ENCODE measurements at regions of chr7 and their contacts with region 1.

Region 1: DNA sequence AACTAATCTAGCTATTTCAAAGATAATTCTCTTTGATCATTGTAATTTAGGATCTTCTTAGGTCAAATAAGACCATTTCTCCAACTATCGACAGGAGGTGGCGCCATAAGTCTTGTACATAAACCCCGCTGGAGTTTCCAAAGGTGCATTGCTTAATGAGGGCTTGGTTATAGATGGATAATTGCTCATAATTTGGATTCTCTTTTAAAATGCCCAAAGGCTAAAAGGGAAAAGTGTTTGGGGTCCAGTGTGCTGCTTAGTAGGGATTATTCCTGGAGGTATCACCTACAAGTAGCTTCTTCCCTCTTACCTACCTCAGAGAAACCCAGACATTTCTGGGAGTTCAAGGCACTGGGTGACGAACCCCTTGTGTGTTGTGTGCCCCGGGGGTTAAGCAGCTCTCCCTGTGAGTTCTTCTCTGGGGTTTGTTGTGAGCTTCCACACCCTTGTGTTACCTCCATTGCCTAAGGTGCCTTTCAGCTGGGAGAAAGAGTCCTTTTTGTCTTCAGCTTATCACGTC is 75.2 kb downstream of the PAXIP1 start:
- DNase-seq: peak; percentile 39
- ATAC-seq: peak; percentile 87
- H3K4me3 ChIP-seq: peak overlapping the region; percentile 66
- H3K27ac ChIP-seq: peak overlapping the region; percentile 82
- H3K4me1 ChIP-seq: peaks cover 4% of the 10 kb centered on the region; the same call in 1 of the 2 replicates
- H3K27me3 ChIP-seq: no peaks in the 10 kb centered on the region
- CTCF ChIP-seq: peak; percentile 61 to 76 (median 62)
- EP300 ChIP-seq: no peak
- POLR2A ChIP-seq: no peak
- RAD21 ChIP-seq: peak; percentile 91

Region 2: GRCh38 chr7:154942691-154943090 is 15.0 kb after region 1 on chr7:
- CTCF ChIA-PET with region 1: interaction called, 22 read pairs
- POLR2A ChIA-PET with region 1: no interaction called
- RAD21 ChIA-PET with region 1: interaction called, 3 read pairs
- SMC1A ChIA-PET with region 1: interaction called, 15 read pairs
- in situ Hi-C with region 1: no loop called
- intact Hi-C with region 1: no loop called
- DNase-seq: no peak
- ATAC-seq: no peak
- H3K4me3 ChIP-seq: no peak overlapping the region
- H3K27ac ChIP-seq: no peak overlapping the region
- H3K4me1 ChIP-seq: no peaks in the 10 kb centered on the region
- H3K27me3 ChIP-seq: no peaks in the 10 kb centered on the region
- CTCF ChIP-seq: no peak
- EP300 ChIP-seq: no peak
- POLR2A ChIP-seq: no peak
- RAD21 ChIP-seq: no peak

Region 3: GRCh38 chr7:154996752-154997151 is 69.1 kb after region 1 on chr7:
- CTCF ChIA-PET with region 1: interaction called, 16 read pairs
- POLR2A ChIA-PET with region 1: interaction called, 6 read pairs
- RAD21 ChIA-PET with region 1: interaction called, 6 read pairs
- SMC1A ChIA-PET with region 1: interaction called, 4 read pairs
- in situ Hi-C with region 1: no loop called
- intact Hi-C with region 1: no loop called
- DNase-seq: no peak
- ATAC-seq: no peak
- H3K4me3 ChIP-seq: no peak overlapping the region
- H3K27ac ChIP-seq: no peak overlapping the region
- H3K4me1 ChIP-seq: 0 out of 2 replicates have a peak, but pooled peaks cover 5% of the 10 kb centered on the region
- H3K27me3 ChIP-seq: no peaks in the 10 kb centered on the region
- CTCF ChIP-seq: no peak
- EP300 ChIP-seq: no peak
- POLR2A ChIP-seq: no peak
- RAD21 ChIP-seq: no peak

Region 4: DNA sequence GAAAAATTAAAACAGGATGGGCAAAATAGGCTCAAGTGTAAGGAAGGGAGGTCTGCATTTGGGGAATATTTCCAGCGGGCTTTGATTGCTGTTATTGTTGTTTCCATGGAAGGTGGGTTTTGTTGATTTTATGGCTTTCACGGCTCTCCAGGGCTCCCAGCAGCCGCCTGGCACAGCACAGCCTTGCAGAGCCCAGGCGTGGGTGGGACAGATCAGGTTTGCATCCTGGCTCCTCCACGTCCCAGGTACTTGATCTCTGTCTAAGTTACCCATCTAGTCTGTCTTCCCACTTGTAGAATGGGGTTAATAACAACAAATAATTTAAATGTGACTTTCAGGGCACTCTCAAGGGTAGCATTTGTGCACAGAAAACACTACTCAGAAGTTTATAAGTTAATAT is 187.6 kb after region 1 on chr7:
- CTCF ChIA-PET with region 1: interaction called, 20 read pairs
- POLR2A ChIA-PET with region 1: no interaction called
- RAD21 ChIA-PET with region 1: interaction called, 10 read pairs
- SMC1A ChIA-PET with region 1: interaction called, 5 read pairs
- in situ Hi-C with region 1: no loop called
- intact Hi-C with region 1: no loop called
- DNase-seq: no peak
- ATAC-seq: no peak
- H3K4me3 ChIP-seq: no peak overlapping the region
- H3K27ac ChIP-seq: no peak overlapping the region
- H3K4me1 ChIP-seq: no peaks in the 10 kb centered on the region
- H3K27me3 ChIP-seq: no peaks in the 10 kb centered on the region
- CTCF ChIP-seq: no peak
- EP300 ChIP-seq: no peak
- POLR2A ChIP-seq: no peak
- RAD21 ChIP-seq: no peak

Region 5: GRCh38 chr7:155141562-155141961 is 213.9 kb after region 1 on chr7:
- CTCF ChIA-PET with region 1: no interaction called
- POLR2A ChIA-PET with region 1: no interaction called
- RAD21 ChIA-PET with region 1: no interaction called
- SMC1A ChIA-PET with region 1: no interaction called
- in situ Hi-C with region 1: no loop called
- intact Hi-C with region 1: no loop called
- DNase-seq: no peak
- ATAC-seq: no peak
- H3K4me3 ChIP-seq: no peak overlapping the region
- H3K27ac ChIP-seq: no peak overlapping the region
- H3K4me1 ChIP-seq: no peaks in the 10 kb centered on the region
- H3K27me3 ChIP-seq: no peaks in the 10 kb centered on the region; a peak in 1 of 4 replicates
- CTCF ChIP-seq: no peak
- EP300 ChIP-seq: no peak
- POLR2A ChIP-seq: no peak
- RAD21 ChIP-seq: no peak

Region 6: GRCh38 chr7:155298834-155299534 is 371.3 kb after region 1 on chr7:
- CTCF ChIA-PET with region 1: interaction called, 23 read pairs
- POLR2A ChIA-PET with region 1: interaction called, 3 read pairs
- RAD21 ChIA-PET with region 1: interaction called, 3 read pairs
- SMC1A ChIA-PET with region 1: interaction called, 8 read pairs
- in situ Hi-C with region 1: no loop called
- intact Hi-C with region 1: loop called (anchors 2 kb)
- DNase-seq: peak; percentile 92
- ATAC-seq: peak; percentile 85
- H3K4me3 ChIP-seq: peak overlapping the region; percentile 94
- H3K27ac ChIP-seq: peak overlapping the region; percentile 88
- H3K4me1 ChIP-seq: peaks cover 6% of the 10 kb centered on the region
- H3K27me3 ChIP-seq: no peaks in the 10 kb centered on the region
- CTCF ChIP-seq: no peak
- EP300 ChIP-seq: peak; percentile 43 to 57; a peak in 3 of 4 replicates
- POLR2A ChIP-seq: peak; percentile 84
- RAD21 ChIP-seq: no peak

Region 7: DNA sequence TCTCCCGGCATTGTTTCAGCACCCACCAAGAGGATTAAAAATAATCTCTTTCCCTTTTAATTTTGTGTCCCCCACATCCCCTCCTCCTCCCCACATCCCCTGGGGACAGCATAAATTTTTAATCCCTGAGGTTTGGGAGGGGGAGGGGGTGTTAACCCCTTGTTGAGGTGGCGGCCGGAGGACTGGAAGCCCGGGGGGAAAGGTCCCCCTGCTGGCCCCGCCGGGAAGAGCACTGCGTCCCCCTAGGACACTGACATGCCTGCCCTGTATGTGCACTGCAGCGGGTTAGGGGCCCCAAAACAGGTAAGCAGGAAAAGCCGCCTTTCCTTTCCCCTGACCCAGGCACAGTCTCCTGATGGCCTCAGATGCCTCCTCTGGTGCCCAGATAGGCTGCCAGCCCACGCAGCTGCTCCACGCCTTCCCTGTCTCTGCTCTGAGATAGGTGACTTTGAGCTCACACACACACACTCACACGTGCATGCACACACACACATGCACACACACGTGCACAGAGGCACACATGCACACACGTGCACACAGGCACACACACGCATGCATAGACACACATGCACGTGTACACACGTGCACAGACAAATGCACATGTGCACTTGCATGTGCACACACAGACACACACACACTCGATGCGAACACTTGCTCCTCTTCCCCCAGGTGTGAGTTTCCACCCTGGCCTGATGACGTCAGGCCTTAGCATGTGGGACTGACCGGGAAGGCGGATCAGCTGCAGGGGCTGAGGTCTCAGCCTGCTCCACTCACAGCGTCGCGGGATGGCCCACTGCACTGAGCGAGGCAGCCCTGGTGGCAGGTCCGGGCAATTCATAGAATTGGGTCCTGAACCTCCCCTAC is 606.4 kb after region 1 on chr7:
- CTCF ChIA-PET with region 1: no interaction called
- POLR2A ChIA-PET with region 1: no interaction called
- RAD21 ChIA-PET with region 1: no interaction called
- SMC1A ChIA-PET with region 1: interaction called, 3 read pairs
- in situ Hi-C with region 1: no loop called
- intact Hi-C with region 1: loop called (anchors 5 kb)
- DNase-seq: no peak
- ATAC-seq: peak; percentile 92
- H3K4me3 ChIP-seq: no peak overlapping the region
- H3K27ac ChIP-seq: no peak overlapping the region
- H3K4me1 ChIP-seq: no peaks in the 10 kb centered on the region
- H3K27me3 ChIP-seq: peaks cover 14 to 25% of the 10 kb centered on the region in 2 experiments
- CTCF ChIP-seq: peak; percentile 53 to 80 (median 56)
- EP300 ChIP-seq: no peak
- POLR2A ChIP-seq: no peak
- RAD21 ChIP-seq: peak; percentile 42